ENCODE measurements at regions of chr1 and their contacts with region 1.

Region 1: GRCh38 chr1:24880697-24881433 is 49.2 kb downstream of the RUNX3 start:
- DNase-seq: no peak
- ATAC-seq: no peak
- H3K4me3 Mint-ChIP-seq: no peak overlapping the region
- H3K27ac Mint-ChIP-seq: no peak overlapping the region
- H3K4me1 Mint-ChIP-seq: no peaks in the 10 kb centered on the region
- H3K27me3 Mint-ChIP-seq: peaks cover 6% of the 10 kb centered on the region
- CTCF ChIP-seq: no peak

Region 2: DNA sequence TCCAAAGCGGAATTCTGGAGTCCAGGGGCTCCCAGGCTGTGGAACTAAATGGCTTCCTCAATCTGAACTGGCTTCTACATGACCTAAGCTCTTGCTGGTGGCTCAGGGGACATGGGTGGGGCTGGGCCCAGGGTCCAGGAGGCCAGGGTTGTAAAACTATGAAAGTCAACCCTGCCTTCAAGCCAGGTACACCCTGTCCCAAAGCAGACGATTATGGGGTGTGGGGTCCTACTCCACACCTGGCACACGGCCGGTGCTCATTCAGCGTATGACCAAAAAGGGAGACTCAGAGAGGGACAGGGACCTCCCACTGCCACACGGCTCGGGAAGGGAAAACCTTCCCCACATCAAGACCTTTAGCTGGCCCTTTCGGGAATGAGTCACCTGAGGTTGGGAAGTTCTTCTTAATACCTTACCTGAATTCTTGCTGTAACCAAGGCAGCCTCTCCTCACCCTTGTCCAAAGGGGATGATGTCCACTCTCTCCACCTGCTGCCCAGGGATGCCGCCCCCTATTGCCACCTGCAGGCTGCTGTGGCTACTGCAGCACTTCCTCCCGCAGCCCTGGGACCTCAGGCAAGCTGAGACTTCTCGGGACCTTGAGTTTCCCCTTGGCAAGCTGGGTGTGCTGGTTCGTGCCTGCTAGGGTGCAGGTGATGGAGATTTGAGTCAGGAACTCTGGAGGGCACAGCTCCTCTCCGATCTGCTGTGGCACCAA is 17.1 kb after region 1 on chr1:
- CTCF ChIA-PET with region 1: interaction called, 12 read pairs
- POLR2A ChIA-PET with region 1: interaction called, 4 read pairs
- intact Hi-C with region 1: no loop called
- DNase-seq: peak; percentile 78
- ATAC-seq: peak; percentile 45
- H3K4me3 Mint-ChIP-seq: peak overlapping the region; percentile 27
- H3K27ac Mint-ChIP-seq: peak overlapping the region; percentile 42
- H3K4me1 Mint-ChIP-seq: peaks cover 38% of the 10 kb centered on the region
- H3K27me3 Mint-ChIP-seq: no peaks in the 10 kb centered on the region
- CTCF ChIP-seq: peak; percentile 95

Region 3: DNA sequence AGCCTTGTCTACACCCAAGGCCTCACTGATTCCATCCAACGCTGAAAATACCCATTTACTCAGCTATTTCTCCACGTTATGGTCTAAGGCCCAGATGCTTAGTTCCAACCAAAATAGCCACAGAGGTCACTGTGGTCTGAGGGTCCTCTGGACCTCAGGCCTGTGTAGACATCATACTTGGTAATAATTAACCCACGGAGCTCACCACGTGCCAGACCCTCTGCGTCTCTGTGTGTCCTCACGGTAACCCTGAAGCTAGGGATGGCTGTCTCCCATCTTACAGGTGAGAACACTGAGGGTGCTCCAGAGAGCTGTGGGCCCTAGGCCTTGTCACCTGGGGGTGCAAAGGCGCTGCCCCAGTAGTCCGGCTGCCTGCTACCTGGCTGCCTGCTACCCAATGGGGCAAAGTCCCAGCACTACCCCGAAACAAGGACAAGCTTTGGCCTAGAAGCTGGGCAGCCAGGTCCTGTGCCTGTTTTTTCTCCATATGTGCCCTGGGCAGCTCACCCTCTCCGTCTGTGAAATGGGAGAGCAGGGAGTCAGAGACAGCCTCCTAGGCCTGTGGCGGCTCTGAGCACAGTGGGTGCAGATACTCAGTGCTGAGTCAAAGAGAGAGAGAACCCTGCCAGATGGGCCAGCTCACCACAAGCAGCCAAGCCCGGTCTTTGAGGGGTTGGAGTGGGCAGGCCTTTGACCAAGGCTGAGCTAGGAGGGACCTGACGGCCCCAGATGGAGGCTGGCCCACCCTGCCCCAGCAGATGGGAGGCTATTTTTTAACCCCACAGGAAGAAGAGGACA is 66.2 kb after region 1 on chr1:
- CTCF ChIA-PET with region 1: no interaction called
- POLR2A ChIA-PET with region 1: no interaction called
- intact Hi-C with region 1: no loop called
- DNase-seq: no peak
- ATAC-seq: peak; percentile 28
- H3K4me3 Mint-ChIP-seq: no peak overlapping the region
- H3K27ac Mint-ChIP-seq: peak overlapping the region; percentile 71
- H3K4me1 Mint-ChIP-seq: peaks cover 73% of the 10 kb centered on the region
- H3K27me3 Mint-ChIP-seq: no peaks in the 10 kb centered on the region
- CTCF ChIP-seq: no peak

Measured in activated CD8-positive, alpha-beta T cell treated with anti-CD3 and anti-CD28 coated beads for 36 hours (primary cell).